Stomach (tissue), 19 donors: ENCODE measurements at regions of chr19 and their contacts with region 1.

Region 1: GRCh38 chr19:39514840-39515550 is at the start of gene SELENOV:
- DNase-seq: peak in 1 of 2 donors; percentile 59
- H3K4me3 ChIP-seq: peak within 1 kb of the TSS; percentile 30 to 46 (median 36)
- H3K27ac ChIP-seq: no peak within 1 kb of the TSS
- H3K4me1 ChIP-seq: peaks cover 11 to 20% (median 17%) of the 10 kb centered on the region in 4 donors
- H3K27me3 ChIP-seq: peaks cover 18 to 89% (median 46%) of the 10 kb centered on the region in 3 donors
- CTCF ChIP-seq: no peak
- EP300 ChIP-seq: no peak
- POLR2A ChIP-seq: no peak
- total RNA-seq, gene SELENOV: not detected

Region 2: GRCh38 chr19:38571682-38572081 is 943.3 kb before region 1 on chr19:
- intact Hi-C with region 1: loop called (anchors 5 kb)
- DNase-seq: no peak
- H3K4me3 ChIP-seq: no peak overlapping the region
- H3K27ac ChIP-seq: no peak overlapping the region
- H3K4me1 ChIP-seq: no peaks in the 10 kb centered on the region
- H3K27me3 ChIP-seq: peaks cover 0 to 16% (median 0%) of the 10 kb centered on the region in 3 donors
- CTCF ChIP-seq: no peak
- EP300 ChIP-seq: no peak
- POLR2A ChIP-seq: no peak

Region 3: GRCh38 chr19:39555883-39556282 is 40.9 kb after region 1 on chr19:
- intact Hi-C with region 1: no loop called
- DNase-seq: no peak
- H3K4me3 ChIP-seq: no peak overlapping the region
- H3K27ac ChIP-seq: no peak overlapping the region
- H3K4me1 ChIP-seq: peaks cover 0 to 17% (median 5%) of the 10 kb centered on the region in 4 donors
- H3K27me3 ChIP-seq: peaks cover 0 to 12% (median 0%) of the 10 kb centered on the region in 3 donors
- CTCF ChIP-seq: no peak
- EP300 ChIP-seq: no peak
- POLR2A ChIP-seq: no peak

Region 4: GRCh38 chr19:40070058-40070457 is 555.1 kb after region 1 on chr19:
- intact Hi-C with region 1: no loop called
- DNase-seq: no peak
- H3K4me3 ChIP-seq: no peak overlapping the region
- H3K27ac ChIP-seq: no peak overlapping the region
- H3K4me1 ChIP-seq: no peaks in the 10 kb centered on the region
- H3K27me3 ChIP-seq: no peaks in the 10 kb centered on the region
- CTCF ChIP-seq: no peak
- EP300 ChIP-seq: no peak
- POLR2A ChIP-seq: no peak